Right cardiac atrium (tissue), 5 donors: ENCODE measurements at regions of chr4 and their contacts with region 1.

Region 1: GRCh38 chr4:159446266-159446976 is 343.5 kb downstream of the RAPGEF2 start:
- DNase-seq: peak in 2 of 3 donors; percentile 24 to 54
- ATAC-seq: peak; percentile 95 to 98
- H3K4me3 ChIP-seq: no peak overlapping the region
- H3K27ac ChIP-seq: no peak overlapping the region
- H3K4me1 ChIP-seq: no peaks in the 10 kb centered on the region
- H3K27me3 ChIP-seq: no peaks in the 10 kb centered on the region

Region 2: GRCh38 chr4:158722917-158723793 is 723.3 kb before region 1 on chr4 and contains the start of gene PPID:
- intact Hi-C with region 1: loop called in 1 of 4 experiments (anchors 10 kb)
- DNase-seq: peak; percentile 87 to 94 (median 94)
- ATAC-seq: peak; percentile 98
- H3K4me3 ChIP-seq: peak within 1 kb of the TSS; percentile 88
- H3K27ac ChIP-seq: peak within 1 kb of the TSS; percentile 88
- H3K4me1 ChIP-seq: peaks cover 4% of the 10 kb centered on the region
- H3K27me3 ChIP-seq: no peaks in the 10 kb centered on the region
- total RNA-seq, gene PPID: 19.2 to 38.3 (median 28.0) TPM

Region 3: GRCh38 chr4:158856852-158857251 is 589.6 kb before region 1 on chr4:
- intact Hi-C with region 1: loop called in 2 of 4 experiments (anchors 10 kb)
- DNase-seq: no peak
- ATAC-seq: peak; percentile 68 to 78
- H3K4me3 ChIP-seq: no peak overlapping the region
- H3K27ac ChIP-seq: no peak overlapping the region
- H3K4me1 ChIP-seq: no peaks in the 10 kb centered on the region
- H3K27me3 ChIP-seq: no peaks in the 10 kb centered on the region

Region 4: GRCh38 chr4:159191989-159192388 is 254.4 kb before region 1 on chr4:
- intact Hi-C with region 1: loop called in 1 of 4 experiments (anchors 10 kb)
- DNase-seq: no peak
- ATAC-seq: no peak
- H3K4me3 ChIP-seq: no peak overlapping the region
- H3K27ac ChIP-seq: no peak overlapping the region
- H3K4me1 ChIP-seq: peaks cover 4% of the 10 kb centered on the region
- H3K27me3 ChIP-seq: no peaks in the 10 kb centered on the region

Region 5: DNA sequence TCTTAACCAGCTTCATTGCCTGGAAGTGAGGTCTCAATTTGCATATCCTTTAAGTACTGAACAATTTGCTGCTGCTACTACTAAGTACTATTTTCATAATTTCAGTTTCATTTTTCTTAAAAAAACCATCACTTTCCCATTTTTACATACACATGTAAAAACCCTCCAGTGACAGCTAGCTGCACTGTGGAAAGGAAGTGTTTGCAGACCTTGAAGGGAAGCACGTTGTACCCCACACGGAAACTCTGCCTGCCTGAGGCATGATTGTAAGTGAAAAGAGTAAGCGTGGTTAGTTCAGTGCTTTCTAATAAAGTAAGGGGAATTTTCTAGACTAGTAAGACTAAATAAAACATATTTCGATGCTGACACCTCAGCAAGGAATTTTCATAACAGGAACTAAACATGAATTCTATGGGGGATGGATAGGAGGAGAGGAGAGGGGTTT is 240.0 kb before region 1 on chr4:
- intact Hi-C with region 1: loop called in 1 of 4 experiments (anchors 10 kb)
- DNase-seq: no peak
- ATAC-seq: no peak
- H3K4me3 ChIP-seq: no peak overlapping the region
- H3K27ac ChIP-seq: no peak overlapping the region
- H3K4me1 ChIP-seq: peaks cover 10% of the 10 kb centered on the region
- H3K27me3 ChIP-seq: no peaks in the 10 kb centered on the region

Region 6: DNA sequence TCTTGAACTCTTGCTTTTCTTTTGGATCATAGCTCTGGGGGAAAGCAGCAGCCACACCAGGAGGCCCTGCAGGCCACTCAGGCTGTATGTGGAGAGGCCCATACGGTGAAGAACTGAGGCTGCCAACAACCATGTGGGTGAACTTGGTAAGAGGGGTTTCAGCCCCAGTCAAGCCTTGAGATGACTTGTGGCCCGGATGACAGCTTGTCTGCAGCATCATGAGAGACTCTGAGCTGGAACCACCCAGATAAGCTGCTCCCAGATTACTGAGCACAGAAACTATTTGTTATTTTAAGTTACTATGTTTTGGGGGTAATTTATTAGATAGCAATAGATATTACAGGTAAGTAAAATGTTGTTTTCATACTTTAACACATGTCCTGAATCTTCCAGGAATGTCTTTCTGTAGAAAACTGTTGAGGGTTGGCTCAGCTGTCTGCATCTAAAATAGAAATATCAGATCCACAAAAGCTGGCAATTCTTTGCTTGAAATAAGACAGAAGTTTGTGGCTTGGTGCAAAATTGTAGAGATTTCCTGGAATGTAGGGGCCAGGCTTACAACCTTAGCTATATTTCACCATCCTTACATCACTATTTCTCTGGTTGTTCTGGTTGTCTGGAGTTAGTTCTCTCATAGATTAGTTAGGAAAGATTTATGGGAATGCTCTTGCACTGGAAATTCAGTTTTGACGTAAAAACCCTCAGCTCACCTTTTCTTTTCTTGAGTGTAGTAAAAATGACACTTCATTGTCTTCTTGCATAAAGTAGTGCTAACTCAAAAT is 71.5 kb before region 1 on chr4:
- intact Hi-C with region 1: loop called in 1 of 4 experiments (anchors 10 kb)
- DNase-seq: no peak
- ATAC-seq: no peak
- H3K4me3 ChIP-seq: no peak overlapping the region
- H3K27ac ChIP-seq: no peak overlapping the region
- H3K4me1 ChIP-seq: no peaks in the 10 kb centered on the region
- H3K27me3 ChIP-seq: no peaks in the 10 kb centered on the region

Region 7: DNA sequence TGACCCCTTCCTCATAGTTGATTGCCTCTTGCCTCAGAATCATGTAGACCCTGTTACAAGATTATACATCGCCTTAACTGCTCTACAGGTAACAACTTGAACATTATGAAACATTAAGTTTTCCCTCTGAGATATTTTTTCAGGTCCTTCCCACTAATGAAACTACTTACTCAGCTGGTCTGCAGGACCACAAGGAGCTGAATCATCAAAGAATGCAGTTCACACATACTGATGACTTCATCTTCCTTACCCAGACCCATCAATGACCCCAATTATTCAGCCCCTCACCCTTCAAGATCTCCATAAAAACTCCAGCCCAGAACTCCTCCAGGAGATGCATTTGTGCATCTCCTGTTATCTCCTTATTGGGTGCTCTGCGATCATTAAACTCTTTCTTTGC is 377.3 kb after region 1 on chr4:
- intact Hi-C with region 1: no loop called
- DNase-seq: no peak
- ATAC-seq: no peak
- H3K4me3 ChIP-seq: no peak overlapping the region
- H3K27ac ChIP-seq: no peak overlapping the region
- H3K4me1 ChIP-seq: no peaks in the 10 kb centered on the region
- H3K27me3 ChIP-seq: no peaks in the 10 kb centered on the region